ENCODE measurements at regions of chr1 and their contacts with region 1.

Region 1: GRCh38 chr1:59163268-59164092 is 133.4 kb upstream of the FGGY start:
- DNase-seq: peak; percentile 98
- H3K4me3 ChIP-seq: no peak overlapping the region
- CTCF ChIP-seq: no peak

Region 2: GRCh38 chr1:58815069-58815685 is 348.3 kb before region 1 on chr1:
- in situ Hi-C with region 1: no loop called
- DNase-seq: peak; percentile 86
- H3K4me3 ChIP-seq: peak overlapping the region; percentile 47
- CTCF ChIP-seq: no peak

Region 3: DNA sequence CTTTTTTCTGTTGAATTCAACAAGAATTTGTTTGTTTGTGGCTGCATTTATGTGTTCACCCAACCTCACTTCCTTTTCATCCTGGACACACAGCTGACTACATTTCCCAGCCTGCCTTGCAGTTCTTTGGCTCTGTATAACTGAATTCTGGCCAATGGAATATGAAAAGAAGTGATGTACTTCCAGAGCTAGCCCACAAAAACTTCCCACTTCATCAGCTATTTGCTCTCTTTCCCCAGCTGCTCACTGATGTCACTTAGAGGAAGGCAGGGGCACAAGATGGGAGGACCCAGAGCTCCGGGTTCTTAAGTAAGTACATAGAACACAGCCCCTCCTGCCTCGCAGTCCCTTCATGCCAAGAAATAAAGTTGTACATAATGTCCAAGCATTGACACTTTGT is 101.6 kb before region 1 on chr1:
- in situ Hi-C with region 1: no loop called
- DNase-seq: peak; percentile 85
- H3K4me3 ChIP-seq: peak overlapping the region; percentile 19
- CTCF ChIP-seq: no peak

Region 4: DNA sequence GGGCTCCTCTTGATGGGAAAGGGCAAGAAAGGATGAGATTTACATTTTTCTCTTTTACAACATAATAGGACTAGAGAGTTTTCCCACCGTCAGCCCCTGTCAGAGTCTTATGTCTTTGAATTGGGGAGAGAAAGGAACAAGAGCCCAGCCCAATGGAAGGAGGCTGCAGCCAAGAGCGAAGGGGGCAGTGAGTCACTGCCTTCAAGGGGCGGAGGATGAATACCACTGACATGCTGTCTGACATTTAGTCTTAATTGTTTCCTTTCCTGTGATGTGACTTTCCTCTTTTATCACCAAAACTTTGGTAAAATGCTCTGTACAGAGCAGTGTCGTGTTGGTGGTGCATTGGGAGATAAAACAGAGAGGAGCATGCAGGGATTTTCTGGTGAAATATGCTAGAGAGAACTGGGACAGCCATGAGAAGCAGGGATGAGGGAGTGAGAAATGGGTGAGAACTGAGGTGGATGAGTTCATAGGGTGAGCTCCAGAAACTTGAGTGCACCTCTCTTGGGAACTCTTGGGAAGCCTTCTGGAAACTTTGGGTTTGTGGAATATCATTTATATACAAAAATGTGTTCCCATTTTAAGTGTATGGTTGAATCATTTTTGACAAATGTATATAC is 46.4 kb before region 1 on chr1:
- in situ Hi-C with region 1: no loop called
- DNase-seq: no peak
- H3K4me3 ChIP-seq: no peak overlapping the region
- CTCF ChIP-seq: no peak

Region 5: DNA sequence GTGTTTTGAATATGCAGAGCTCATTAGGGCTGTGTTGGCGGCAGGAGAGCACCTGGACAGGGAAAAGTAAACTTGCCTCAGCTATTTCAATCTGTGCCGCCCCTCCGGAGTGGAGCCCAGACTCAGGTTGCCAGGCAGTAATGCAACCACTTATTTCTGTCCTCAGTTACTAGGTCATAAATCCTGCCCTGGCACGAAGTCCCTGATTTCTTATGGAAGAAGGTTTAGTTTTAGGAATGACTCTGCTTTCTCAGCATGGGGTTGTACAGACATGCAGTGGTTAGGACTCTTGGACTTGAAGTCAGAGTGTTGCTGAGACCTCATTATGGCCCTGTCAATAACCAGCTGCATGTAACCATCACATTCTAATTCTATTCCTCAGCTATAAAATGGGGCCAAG is 35.1 kb after region 1 on chr1:
- in situ Hi-C with region 1: loop called (anchors 5 kb)
- DNase-seq: peak; percentile 65
- H3K4me3 ChIP-seq: no peak overlapping the region
- CTCF ChIP-seq: no peak

Measured in astrocyte of the cerebellum (primary cell).